ENCODE measurements at regions of chr18 and their contacts with region 1.

Region 1: DNA sequence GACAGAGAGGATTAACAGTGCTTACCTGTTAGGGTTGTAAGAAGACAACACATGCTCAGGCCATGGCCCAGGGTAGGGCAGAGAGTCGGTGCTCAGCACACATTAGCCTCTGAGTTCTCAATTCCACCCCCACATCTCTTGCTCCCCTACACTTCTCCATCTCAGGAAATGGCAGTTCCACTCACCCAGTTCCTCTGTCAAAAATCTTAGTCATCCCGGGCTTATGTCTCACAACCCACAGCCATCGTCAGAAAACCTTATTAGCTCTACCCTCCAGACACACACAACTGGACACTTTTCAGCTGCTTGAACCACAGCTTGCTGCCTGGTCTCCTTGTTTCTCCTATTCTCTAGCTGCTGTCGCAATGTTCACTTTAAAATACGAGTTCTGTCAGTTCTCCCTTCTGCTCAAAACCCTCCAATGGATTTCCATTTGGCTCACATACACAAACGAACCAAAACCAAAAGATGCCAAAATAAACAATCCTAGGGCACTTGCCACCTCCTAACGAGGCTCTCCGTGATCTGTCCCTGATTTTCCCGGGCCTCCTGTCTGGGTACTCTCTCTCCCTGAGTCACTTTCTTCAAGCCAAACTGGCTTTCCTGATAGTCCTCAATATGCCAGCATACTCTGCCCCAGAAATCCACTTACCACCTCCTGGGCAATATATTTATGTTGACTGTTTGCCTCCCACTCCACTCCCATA is 89.7 kb downstream of the KCTD1 start:
- DNase-seq: no peak
- ATAC-seq: no peak
- H3K4me3 ChIP-seq: no peak overlapping the region
- H3K27ac ChIP-seq: no peak overlapping the region
- H3K4me1 ChIP-seq: peaks cover 0 to 33% (median 10%) of the 10 kb centered on the region in 12 donors
- H3K27me3 ChIP-seq: no peaks in the 10 kb centered on the region
- CTCF ChIP-seq: no peak
- POLR2A ChIP-seq: no peak

Region 2: DNA sequence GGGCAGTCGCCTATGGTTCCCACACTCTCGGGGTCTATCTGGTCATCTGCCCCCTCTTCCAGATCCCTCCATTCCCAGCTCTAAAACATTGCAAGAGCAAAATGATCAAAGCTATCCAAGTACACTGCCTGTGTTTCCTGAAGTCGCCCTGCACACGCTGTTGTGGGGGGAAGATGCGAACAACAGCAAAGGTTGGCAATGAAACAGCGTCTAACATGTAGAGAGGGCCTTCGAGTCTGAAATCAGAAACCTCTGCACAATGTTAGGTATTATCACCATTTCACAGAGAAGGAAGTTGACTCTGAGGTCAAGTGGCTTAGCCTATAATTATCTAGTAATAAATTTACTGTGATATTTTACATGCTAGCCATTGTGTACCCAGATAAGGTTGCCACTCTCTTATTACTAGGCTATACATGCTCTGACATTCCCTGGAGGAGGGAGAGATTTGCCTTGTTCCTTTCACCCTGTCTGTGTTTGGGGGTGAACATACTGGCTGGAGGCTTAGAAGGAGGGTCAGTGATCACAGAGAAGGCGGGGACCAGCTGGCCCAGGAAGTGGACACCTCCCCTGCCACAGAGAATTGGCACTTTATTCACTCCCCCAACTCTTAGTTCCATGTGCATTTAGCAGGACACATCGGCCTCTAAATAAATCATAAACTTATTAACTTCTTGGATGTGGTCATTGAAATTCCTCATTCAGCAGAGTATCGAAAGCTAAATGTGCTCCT is 52.8 kb after region 1 on chr18:
- intact Hi-C with region 1: loop called in 3 of 10 experiments (anchors 2 to 10 kb)
- DNase-seq: no peak
- ATAC-seq: peak in 3 of 4 donors; percentile 16 to 30 (median 27)
- H3K4me3 ChIP-seq: peak overlapping the region in 1 of 12 donors; percentile 9
- H3K27ac ChIP-seq: peak overlapping the region in 5 of 12 donors; percentile 11 to 51 (median 44)
- H3K4me1 ChIP-seq: peaks cover 1 to 45% (median 21%) of the 10 kb centered on the region in 12 donors
- H3K27me3 ChIP-seq: no peaks in the 10 kb centered on the region
- CTCF ChIP-seq: no peak
- POLR2A ChIP-seq: no peak

Region 3: DNA sequence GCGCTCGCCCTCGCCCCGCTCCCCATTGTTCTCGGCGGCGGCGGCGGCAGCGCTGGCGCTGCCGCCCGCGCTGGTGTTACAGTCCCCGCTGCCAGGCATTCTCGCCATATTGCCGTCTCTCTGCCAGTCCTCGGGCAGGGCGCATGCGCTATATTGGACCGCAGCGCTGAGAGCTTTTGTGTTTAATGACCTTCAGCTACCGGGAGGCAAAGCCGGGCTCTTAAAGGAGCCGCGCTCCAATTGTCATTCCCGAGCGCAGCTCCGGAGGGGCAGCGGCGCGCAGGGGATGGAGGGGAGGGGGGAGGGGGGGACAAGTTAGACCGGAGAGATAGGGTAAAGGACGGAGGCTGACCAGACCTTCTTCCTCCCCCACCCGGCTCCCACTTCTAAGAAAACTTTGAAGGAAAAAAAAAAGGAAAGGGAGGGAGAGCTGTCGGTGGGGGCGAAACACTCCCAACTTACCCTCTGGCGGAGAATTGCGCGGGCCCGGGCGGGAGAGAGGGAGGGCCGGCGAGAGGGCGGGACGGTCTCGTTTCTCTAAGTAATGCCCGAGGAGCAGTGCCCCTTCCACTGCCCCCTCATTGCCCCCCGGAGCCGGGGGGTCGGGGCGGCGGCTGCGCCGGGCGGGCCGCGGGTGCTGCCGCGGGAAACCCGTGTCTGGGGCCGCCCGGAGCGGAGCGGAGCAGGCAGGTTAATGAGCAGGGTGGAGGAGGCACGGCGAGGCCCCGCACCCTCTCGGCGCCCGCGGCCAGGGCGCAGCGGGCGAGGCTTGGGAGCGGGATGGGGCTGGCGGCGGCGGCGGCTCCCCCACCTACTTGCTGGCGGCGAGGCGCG is 90.0 kb after region 1 on chr18 and contains the start of gene KCTD1:
- intact Hi-C with region 1: loop called in 1 of 10 experiments (anchors 10 kb)
- DNase-seq: peak; percentile 77 to 91 (median 83)
- ATAC-seq: peak; percentile 61 to 83 (median 78)
- H3K4me3 ChIP-seq: peak within 1 kb of the TSS; percentile 67 to 93 (median 77)
- H3K27ac ChIP-seq: peak within 1 kb of the TSS; percentile 48 to 83 (median 74)
- H3K4me1 ChIP-seq: peaks cover 0 to 56% (median 34%) of the 10 kb centered on the region in 12 donors
- H3K27me3 ChIP-seq: peaks cover 0 to 43% (median 14%) of the 10 kb centered on the region in 9 donors
- CTCF ChIP-seq: no peak
- POLR2A ChIP-seq: no peak
- total RNA-seq, gene KCTD1: 8.4 to 21.8 (median 10.0) TPM

Measured in heart left ventricle (tissue), 16 donors.